Transverse colon (tissue), 4 donors: ENCODE measurements at regions of chr13 and their contacts with region 1.

Region 1: DNA sequence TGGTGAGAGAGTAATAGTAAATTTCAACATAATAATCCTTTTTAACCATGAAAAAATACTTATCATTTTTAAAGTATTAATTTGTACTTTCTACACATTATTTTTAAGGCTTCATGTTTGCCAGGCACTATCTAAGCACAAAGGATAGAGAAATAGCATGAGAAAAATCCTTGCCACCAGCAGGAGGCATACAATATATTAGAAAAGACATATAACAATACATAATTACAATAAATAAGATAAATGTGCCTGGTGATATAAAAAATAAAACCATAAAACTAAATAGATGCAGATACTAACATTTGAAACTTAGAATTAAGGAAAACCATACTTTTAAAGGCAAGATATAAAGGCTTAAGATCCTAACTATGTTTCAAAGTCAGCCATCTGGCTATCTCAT is 1256.4 kb downstream of the DIAPH3 start:
- DNase-seq: no peak
- H3K4me3 ChIP-seq: no peak overlapping the region
- H3K27ac ChIP-seq: no peak overlapping the region
- H3K4me1 ChIP-seq: no peaks in the 10 kb centered on the region
- H3K27me3 ChIP-seq: no peaks in the 10 kb centered on the region
- CTCF ChIP-seq: no peak
- EP300 ChIP-seq: no peak
- POLR2A ChIP-seq: no peak

Region 2: DNA sequence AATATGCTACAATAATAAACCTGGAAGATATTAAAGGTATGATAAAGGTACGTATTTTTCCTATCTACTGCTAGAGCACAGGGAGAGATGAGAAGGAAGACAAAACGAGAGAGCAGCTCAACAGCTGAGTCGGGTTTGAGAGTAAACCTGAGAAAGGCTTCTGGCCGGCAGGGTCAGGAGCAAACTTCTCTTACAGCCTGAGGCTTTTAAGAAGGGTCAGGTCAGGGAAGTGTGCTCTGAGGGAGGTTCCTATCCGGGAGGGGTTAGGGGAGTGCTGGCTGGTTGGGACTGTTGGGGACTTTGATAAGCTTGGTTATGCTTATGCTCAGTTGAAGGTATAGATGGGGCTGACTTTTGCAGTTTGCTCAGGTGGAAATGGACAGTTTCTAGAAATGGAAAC is 1844.3 kb before region 1 on chr13:
- in situ Hi-C with region 1: no loop called
- intact Hi-C with region 1: loop called (anchors 10 kb)
- DNase-seq: no peak
- H3K4me3 ChIP-seq: no peak overlapping the region
- H3K27ac ChIP-seq: no peak overlapping the region
- H3K4me1 ChIP-seq: no peaks in the 10 kb centered on the region
- H3K27me3 ChIP-seq: no peaks in the 10 kb centered on the region
- CTCF ChIP-seq: no peak
- EP300 ChIP-seq: no peak
- POLR2A ChIP-seq: no peak